ENCODE measurements at regions of chrX and their contacts with region 1.

Region 1: DNA sequence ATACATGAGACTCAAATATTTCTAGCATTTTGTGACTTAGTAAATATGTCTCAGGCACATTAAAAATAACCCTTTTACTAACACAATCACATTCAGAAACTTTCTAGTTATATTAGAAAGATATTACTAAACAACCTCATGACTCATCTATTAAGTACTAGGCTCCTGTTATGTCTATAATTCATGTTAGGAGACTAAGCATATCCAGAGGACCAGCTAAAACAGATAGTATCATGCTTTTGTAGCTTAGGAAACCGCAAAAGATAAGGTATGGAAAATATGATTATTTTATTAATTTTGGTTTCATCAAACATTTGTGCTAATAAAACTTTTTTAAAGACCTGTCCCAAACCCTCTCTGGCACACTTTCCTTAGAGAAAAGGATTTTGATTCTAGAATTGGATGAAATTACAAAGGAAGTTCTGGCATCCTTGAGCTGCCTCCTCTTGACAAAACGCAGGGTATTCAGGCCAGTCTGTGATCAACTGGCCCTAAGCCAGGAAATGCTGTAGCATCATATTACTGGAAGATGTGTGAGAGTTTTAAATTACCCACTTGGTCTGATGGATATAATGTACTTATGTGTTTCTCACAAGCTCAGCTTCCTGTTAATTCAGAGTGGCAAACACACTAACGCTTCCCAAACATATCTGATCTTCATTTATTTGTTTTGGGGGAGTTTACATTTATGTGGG is 60.4 kb downstream of the NRK start:
- DNase-seq: peak; percentile 27
- H3K4me3 ChIP-seq: no peak overlapping the region
- H3K27ac ChIP-seq: no peak overlapping the region
- H3K4me1 ChIP-seq: peaks cover 3% of the 10 kb centered on the region
- H3K27me3 ChIP-seq: no peaks in the 10 kb centered on the region
- CTCF ChIP-seq: no peak
- POLR2A ChIP-seq: no peak

Region 2: DNA sequence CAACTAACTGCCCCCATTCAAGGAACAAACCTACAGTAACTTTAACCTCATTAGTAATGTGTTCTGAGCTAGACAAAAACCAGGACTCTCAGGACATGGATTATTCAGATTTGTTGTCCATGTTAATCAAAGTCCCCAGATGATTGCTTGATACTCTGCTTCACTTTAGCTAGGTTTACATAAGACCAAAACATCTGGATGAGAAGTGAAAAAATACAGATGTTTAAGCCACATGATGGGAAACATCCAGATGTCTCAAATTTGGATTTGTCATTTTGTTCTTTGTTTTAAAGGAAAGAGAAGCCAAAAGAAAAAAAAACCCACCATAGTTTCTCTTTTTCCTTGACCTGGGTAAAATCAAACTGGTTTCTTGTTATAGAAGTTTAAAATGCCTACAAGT is 108.9 kb before region 1 on chrX:
- CTCF ChIA-PET with region 1: no interaction called
- POLR2A ChIA-PET with region 1: no interaction called
- dilution Hi-C with region 1: no loop called
- intact Hi-C with region 1: loop called (anchors 10 kb)
- DNase-seq: no peak
- H3K4me3 ChIP-seq: no peak overlapping the region
- H3K27ac ChIP-seq: no peak overlapping the region
- H3K4me1 ChIP-seq: no peaks in the 10 kb centered on the region
- H3K27me3 ChIP-seq: no peaks in the 10 kb centered on the region
- CTCF ChIP-seq: no peak
- POLR2A ChIP-seq: no peak

Measured in endothelial cell of umbilical vein (primary cell).